ENCODE measurements at regions of chr20 and their contacts with region 1.

Region 1: GRCh38 chr20:57432874-57433491 is 41.8 kb downstream of the RBM38 start:
- DNase-seq: peak; percentile 65 to 66
- ATAC-seq: peak; percentile 59 to 89 (median 84)
- H3K4me3 ChIP-seq: no peak overlapping the region
- H3K27ac ChIP-seq: peak overlapping the region in 9 of 10 donors; percentile 43 to 71 (median 61)
- H3K4me1 ChIP-seq: peaks cover 13 to 72% (median 41%) of the 10 kb centered on the region in 9 donors
- H3K27me3 ChIP-seq: no peaks in the 10 kb centered on the region
- CTCF ChIP-seq: no peak

Region 2: GRCh38 chr20:57391074-57391554 is 41.9 kb before region 1 on chr20 and contains the start of gene RBM38:
- intact Hi-C with region 1: loop called in 6 of 10 experiments (anchors 2 to 5 kb)
- DNase-seq: peak; percentile 60 to 78
- ATAC-seq: peak; percentile 43 to 83 (median 66)
- H3K4me3 ChIP-seq: peak within 1 kb of the TSS; percentile 69 to 84 (median 73)
- H3K27ac ChIP-seq: peak within 1 kb of the TSS; percentile 88 to 97 (median 90)
- H3K4me1 ChIP-seq: peaks cover 14 to 64% (median 58%) of the 10 kb centered on the region in 9 donors
- H3K27me3 ChIP-seq: no peaks in the 10 kb centered on the region
- CTCF ChIP-seq: no peak
- total RNA-seq, gene RBM38: 35.5 to 119 (median 50.2) TPM

Region 3: GRCh38 chr20:57398231-57398821 is 34.7 kb before region 1 on chr20:
- intact Hi-C with region 1: loop called in 6 of 10 experiments (anchors 2 to 5 kb)
- DNase-seq: peak; percentile 57 to 66
- ATAC-seq: peak; percentile 3 to 48 (median 26)
- H3K4me3 ChIP-seq: peak overlapping the region in 7 of 10 donors; percentile 3 to 23 (median 9)
- H3K27ac ChIP-seq: peak overlapping the region in 9 of 10 donors; percentile 39 to 95 (median 47)
- H3K4me1 ChIP-seq: peaks cover 26 to 94% (median 83%) of the 10 kb centered on the region in 9 donors
- H3K27me3 ChIP-seq: no peaks in the 10 kb centered on the region
- CTCF ChIP-seq: no peak

Region 4: GRCh38 chr20:57473246-57474048 is 40.5 kb after region 1 on chr20:
- intact Hi-C with region 1: loop called in 1 of 10 experiments (anchors 5 kb)
- DNase-seq: no peak
- ATAC-seq: peak in 5 of 8 donors; percentile 13 to 49 (median 21)
- H3K4me3 ChIP-seq: no peak overlapping the region
- H3K27ac ChIP-seq: peak overlapping the region in 2 of 10 donors; percentile 19 to 65
- H3K4me1 ChIP-seq: peaks cover 0 to 42% (median 16%) of the 10 kb centered on the region in 9 donors
- H3K27me3 ChIP-seq: peaks cover 0 to 8% (median 0%) of the 10 kb centered on the region in 7 donors
- CTCF ChIP-seq: peak in 2 of 9 donors; percentile 14 to 19

Region 5: GRCh38 chr20:57498425-57499400 is 65.7 kb after region 1 on chr20:
- intact Hi-C with region 1: loop called in 2 of 10 experiments (anchors 5 to 10 kb)
- DNase-seq: no peak
- ATAC-seq: peak in 3 of 8 donors; percentile 50 to 66 (median 53)
- H3K4me3 ChIP-seq: no peak overlapping the region
- H3K27ac ChIP-seq: no peak overlapping the region
- H3K4me1 ChIP-seq: peaks cover 0 to 38% (median 16%) of the 10 kb centered on the region in 9 donors
- H3K27me3 ChIP-seq: peaks cover 0 to 67% (median 4%) of the 10 kb centered on the region in 7 donors
- CTCF ChIP-seq: peak in 5 of 9 donors; percentile 22 to 41 (median 32)